ENCODE measurements at regions of chr18 and their contacts with region 1.

Region 1: GRCh38 chr18:46281185-46282176 is 177.3 kb downstream of the HAUS1 start:
- DNase-seq: peak; percentile 76
- ATAC-seq: peak; percentile 91
- H3K4me3 ChIP-seq: no peak overlapping the region
- H3K27ac ChIP-seq: no peak overlapping the region
- H3K4me1 ChIP-seq: no peaks in the 10 kb centered on the region
- H3K27me3 ChIP-seq: no peaks in the 10 kb centered on the region
- CTCF ChIP-seq: peak; percentile 94

Region 2: GRCh38 chr18:46481048-46481846 is 199.8 kb after region 1 on chr18:
- intact Hi-C with region 1: loop called (anchors 10 kb)
- DNase-seq: no peak
- ATAC-seq: peak; percentile 62
- H3K4me3 ChIP-seq: no peak overlapping the region
- H3K27ac ChIP-seq: no peak overlapping the region
- H3K4me1 ChIP-seq: no peaks in the 10 kb centered on the region
- H3K27me3 ChIP-seq: no peaks in the 10 kb centered on the region
- CTCF ChIP-seq: peak; percentile 74

Region 3: DNA sequence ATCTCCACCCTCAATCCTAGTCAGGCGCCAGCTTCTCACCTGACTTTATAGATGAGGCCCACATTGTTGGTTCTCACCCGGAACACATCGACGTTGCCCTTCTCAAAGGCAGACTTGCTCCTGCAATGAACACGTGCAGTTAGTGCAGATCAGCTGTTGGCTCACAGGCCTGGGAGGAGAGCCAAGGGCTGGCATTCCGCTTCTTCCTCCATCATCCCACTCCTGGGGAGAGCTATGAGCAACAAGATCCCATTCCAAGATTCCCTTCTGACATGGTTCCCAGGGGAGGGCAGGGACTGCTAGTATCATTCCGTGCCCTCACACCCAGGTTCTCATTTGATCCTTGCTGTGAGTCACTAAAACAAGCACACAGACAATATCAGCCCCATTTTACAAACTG is 360.4 kb after region 1 on chr18:
- intact Hi-C with region 1: loop called (anchors 10 kb)
- DNase-seq: no peak
- ATAC-seq: no peak
- H3K4me3 ChIP-seq: no peak overlapping the region
- H3K27ac ChIP-seq: no peak overlapping the region
- H3K4me1 ChIP-seq: no peaks in the 10 kb centered on the region
- H3K27me3 ChIP-seq: no peaks in the 10 kb centered on the region
- CTCF ChIP-seq: no peak